Mammary epithelial cell (primary cell): ENCODE measurements at regions of chr9 and their contacts with region 1.

Region 1: DNA sequence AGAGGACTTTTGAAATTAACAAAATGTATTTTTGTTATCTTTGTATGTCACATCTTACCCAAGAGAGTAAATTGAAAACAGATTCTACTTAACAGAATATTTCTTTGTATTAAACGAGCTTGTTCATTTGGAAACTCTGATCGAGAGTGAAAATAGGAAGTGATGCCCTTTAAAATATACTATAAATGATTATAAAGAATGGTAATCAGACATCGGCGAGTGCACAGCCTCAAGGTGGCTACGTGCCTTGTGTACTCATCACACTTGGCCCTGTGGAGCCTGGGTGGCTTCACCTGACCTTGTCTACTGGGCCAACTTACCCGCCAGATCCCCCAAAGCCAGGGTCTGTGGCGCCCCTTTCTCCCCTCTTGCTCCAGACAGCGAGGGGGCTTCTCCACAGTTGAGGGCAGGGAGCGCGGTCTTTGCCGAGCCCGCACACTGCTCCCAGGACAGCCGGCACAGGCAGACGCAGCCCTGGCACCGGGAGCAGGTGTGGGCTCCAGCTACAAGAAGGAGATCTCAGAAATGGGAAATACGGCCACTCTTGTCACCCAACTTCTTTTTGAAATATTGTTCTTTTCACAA is 243.2 kb downstream of the CEMIP2 start:
- DNase-seq: no peak
- H3K4me3 ChIP-seq: no peak overlapping the region
- H3K27ac ChIP-seq: no peak overlapping the region
- H3K4me1 ChIP-seq: no peaks in the 10 kb centered on the region
- H3K27me3 ChIP-seq: no peaks in the 10 kb centered on the region
- CTCF ChIP-seq: no peak

Region 2: GRCh38 chr9:71472400-71472799 is 52.7 kb before region 1 on chr9:
- CTCF ChIA-PET with region 1: no interaction called
- dilution Hi-C with region 1: loop called (anchors 5 kb)
- in situ Hi-C with region 1: no loop called
- intact Hi-C with region 1: no loop called
- DNase-seq: no peak
- H3K4me3 ChIP-seq: no peak overlapping the region
- H3K27ac ChIP-seq: no peak overlapping the region
- H3K4me1 ChIP-seq: no peaks in the 10 kb centered on the region
- H3K27me3 ChIP-seq: no peaks in the 10 kb centered on the region
- CTCF ChIP-seq: no peak

Region 3: DNA sequence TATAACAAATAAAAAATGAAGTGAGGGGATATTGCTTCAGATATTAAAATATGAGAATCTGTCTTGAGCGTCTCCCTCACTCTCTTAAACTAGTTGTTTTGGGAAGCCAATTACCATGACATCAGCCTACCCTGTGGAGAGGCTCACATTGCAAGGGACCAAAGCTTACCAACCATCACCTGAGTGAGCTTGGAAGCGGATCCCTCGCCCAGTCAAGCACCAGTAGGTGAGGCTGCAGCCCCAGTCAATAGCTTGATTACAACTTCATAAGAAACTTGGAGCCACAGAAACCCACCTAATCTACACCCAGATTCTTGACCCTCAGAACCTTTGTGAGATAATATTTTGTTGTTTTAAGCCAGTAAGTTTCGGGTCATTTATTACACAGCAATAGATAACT is 37.1 kb after region 1 on chr9:
- CTCF ChIA-PET with region 1: no interaction called
- dilution Hi-C with region 1: loop called (anchors 5 kb)
- in situ Hi-C with region 1: no loop called
- intact Hi-C with region 1: no loop called
- DNase-seq: no peak
- H3K4me3 ChIP-seq: no peak overlapping the region
- H3K27ac ChIP-seq: no peak overlapping the region
- H3K4me1 ChIP-seq: no peaks in the 10 kb centered on the region
- H3K27me3 ChIP-seq: no peaks in the 10 kb centered on the region
- CTCF ChIP-seq: no peak